MCF 10A (cell line): ENCODE measurements at regions of chr1 and their contacts with region 1.

Region 1: DNA sequence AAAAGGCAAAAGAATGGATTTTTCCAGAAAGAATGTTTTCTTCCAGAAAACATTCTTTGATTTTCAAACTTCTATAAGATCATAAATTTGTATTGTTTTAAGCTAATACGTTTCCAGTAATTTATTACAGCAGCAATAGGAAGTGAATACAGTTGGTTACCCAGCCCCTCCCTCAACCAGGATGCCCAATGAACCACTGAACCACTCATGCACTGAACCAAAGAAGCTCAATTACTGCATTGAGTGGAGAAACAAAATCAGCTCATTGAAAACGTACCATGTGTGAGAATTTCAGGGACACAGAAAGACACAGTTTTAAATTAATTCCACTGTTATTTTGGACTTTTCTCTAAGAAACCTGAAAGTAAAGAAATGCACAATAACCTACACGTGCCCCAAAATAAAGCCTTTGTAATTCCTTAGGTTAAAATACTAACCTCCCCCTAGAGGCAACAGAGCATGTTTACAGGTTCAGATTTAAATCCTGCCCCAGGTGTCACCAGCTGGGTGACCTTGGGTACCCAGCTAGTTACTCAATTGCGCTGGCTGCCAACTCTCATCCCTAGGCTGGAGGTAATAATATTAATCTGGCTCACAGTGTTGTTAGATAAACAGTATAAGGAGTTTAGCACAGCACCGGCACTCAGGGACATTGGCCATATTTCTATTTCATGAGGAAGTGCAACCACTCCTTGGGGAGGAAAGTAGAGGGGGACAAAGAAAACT is 111.7 kb downstream of the NMNAT2 start:
- DNase-seq: peak; percentile 46
- H3K4me3 Mint-ChIP-seq: no peak overlapping the region
- H3K27ac Mint-ChIP-seq: no peak overlapping the region
- H3K4me1 Mint-ChIP-seq: peaks cover 21% of the 10 kb centered on the region
- H3K27me3 Mint-ChIP-seq: no peaks in the 10 kb centered on the region
- CTCF ChIP-seq: peak; percentile 32

Region 2: DNA sequence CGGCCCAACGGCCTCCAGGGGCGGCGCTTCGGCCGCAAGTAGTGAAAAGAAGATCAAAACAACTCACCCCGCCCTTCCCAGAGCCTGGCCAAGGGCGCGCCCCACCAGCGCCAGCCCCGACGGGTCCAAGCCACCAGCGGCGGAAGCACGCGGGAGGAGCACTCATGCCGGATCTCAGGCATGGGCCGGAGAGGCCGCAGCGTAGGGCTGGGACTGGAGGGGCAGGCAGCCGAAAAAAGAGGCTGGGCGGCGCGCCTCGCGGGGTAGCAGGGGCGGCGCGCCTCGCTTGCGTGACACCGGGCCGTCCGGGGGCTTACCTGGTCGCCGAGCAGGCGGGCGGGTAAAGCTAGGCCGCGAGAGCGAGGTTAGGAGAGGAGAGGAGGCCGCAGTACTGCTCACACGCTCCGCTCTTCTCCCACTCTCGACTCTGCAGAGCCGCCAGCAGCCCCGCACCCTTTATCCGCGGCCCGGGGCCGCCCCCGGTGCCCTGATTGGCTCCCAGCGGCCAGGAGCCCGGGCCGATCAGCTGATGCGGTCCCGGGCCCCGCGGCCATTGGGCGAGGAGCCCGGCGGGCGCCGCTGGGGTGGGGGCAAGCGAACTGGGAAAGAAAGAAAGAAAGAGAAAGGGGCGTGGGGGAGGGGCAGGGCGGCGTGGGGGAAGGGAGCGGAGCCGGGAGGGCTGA is 915.0 kb before region 1 on chr1 and contains the start of gene GLUL:
- CTCF ChIA-PET with region 1: no interaction called
- POLR2A ChIA-PET with region 1: no interaction called
- intact Hi-C with region 1: no loop called
- DNase-seq: peak; percentile 90
- H3K4me3 Mint-ChIP-seq: peak within 1 kb of the TSS; percentile 100
- H3K27ac Mint-ChIP-seq: peak within 1 kb of the TSS; percentile 100
- H3K4me1 Mint-ChIP-seq: peaks cover 27% of the 10 kb centered on the region
- H3K27me3 Mint-ChIP-seq: no peaks in the 10 kb centered on the region
- CTCF ChIP-seq: peak; percentile 2
- total RNA-seq, gene GLUL: 240 and 437 TPM in 2 replicates

Region 3: GRCh38 chr1:183291802-183292514 is 14.5 kb before region 1 on chr1:
- CTCF ChIA-PET with region 1: interaction called, 12 read pairs
- POLR2A ChIA-PET with region 1: interaction called, 4 read pairs
- intact Hi-C with region 1: no loop called
- DNase-seq: no peak
- H3K4me3 Mint-ChIP-seq: no peak overlapping the region
- H3K27ac Mint-ChIP-seq: no peak overlapping the region
- H3K4me1 Mint-ChIP-seq: peaks cover 9% of the 10 kb centered on the region
- H3K27me3 Mint-ChIP-seq: no peaks in the 10 kb centered on the region
- CTCF ChIP-seq: no peak